HEK293T (cell line): ENCODE measurements at regions of chr10 and their contacts with region 1.

Region 1: DNA sequence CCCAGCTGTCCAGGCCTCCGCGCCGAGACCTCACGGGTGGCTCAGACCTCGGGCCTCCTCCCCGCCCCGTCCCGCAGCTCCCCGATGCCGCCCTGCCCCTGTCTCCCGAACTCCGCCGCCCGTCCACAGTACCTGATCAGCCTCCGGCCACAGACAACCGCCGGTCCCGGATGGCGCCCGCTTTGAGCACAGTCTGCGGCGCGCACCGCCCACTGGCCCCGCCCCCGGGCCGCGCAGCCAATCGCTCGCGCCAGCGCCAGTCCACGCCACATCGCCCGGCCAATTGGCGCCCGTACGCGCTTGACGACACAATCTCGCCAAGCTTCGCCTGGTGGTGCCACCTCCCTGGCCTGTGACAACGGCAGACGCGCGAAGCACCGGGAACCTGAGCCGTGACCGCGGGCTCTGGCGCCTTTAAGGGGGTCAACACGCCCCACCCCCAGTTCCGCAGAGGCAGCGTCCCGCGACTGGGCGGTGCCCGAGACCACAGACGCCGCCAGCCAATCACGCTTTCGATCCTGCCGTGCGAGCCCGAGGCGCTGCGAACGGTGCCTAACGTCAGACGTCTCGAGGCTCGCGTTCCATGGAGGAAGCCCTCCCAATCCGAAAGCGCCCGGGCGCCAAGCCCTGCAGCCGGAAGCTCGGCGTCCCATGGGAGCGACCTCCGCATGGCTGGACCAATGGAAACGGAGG is at the start of gene IDI1:
- DNase-seq: peak; percentile 92

Region 2: GRCh38 chr10:1036341-1036791 is 12.5 kb before region 1 on chr10:
- CTCF ChIA-PET with region 1: no interaction called
- POLR2A ChIA-PET with region 1: interaction called, 12 read pairs
- DNase-seq: no peak